ENCODE measurements at regions of chr3 and their contacts with region 1.

Region 1: DNA sequence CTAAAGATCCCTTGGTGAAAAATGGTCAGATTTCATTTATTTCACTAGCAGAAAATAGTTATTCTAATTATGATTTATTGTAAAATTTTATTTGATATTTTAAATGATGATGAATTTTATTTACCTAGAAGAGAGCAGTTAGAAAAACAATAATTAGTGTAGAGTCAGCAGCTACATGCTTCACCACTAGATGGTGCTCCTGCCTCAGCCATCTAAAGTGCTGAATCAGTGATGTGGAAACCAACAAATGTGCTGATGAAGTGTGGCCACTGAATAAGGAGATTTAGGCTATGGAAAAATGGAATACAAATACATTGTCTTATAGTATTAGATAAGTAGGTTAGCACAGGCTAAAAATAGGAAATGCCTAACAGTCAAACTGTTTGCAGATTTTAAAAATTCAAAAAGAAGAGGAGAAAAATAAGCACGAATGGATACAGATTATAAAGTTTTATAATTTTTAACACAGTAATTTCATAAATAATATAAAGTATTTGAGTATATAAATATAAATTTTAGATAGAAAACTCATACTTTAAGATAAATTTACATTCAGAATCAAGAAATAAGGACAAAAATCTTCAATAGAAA is 109.8 kb downstream of the PPP2R3A start:
- DNase-seq: peak; percentile 52 to 85 (median 74)
- ATAC-seq: peak; percentile 55
- H3K4me3 ChIP-seq: no peak overlapping the region
- H3K4me3 Mint-ChIP-seq: no peak overlapping the region
- H3K27ac ChIP-seq: no peak overlapping the region
- H3K27ac Mint-ChIP-seq: no peak overlapping the region
- H3K4me1 ChIP-seq: no peaks in the 10 kb centered on the region
- H3K4me1 Mint-ChIP-seq: peaks cover 4% of the 10 kb centered on the region
- H3K27me3 ChIP-seq: no peaks in the 10 kb centered on the region
- H3K27me3 Mint-ChIP-seq: no peaks in the 10 kb centered on the region
- CTCF ChIP-seq: peak; percentile 99

Region 2: DNA sequence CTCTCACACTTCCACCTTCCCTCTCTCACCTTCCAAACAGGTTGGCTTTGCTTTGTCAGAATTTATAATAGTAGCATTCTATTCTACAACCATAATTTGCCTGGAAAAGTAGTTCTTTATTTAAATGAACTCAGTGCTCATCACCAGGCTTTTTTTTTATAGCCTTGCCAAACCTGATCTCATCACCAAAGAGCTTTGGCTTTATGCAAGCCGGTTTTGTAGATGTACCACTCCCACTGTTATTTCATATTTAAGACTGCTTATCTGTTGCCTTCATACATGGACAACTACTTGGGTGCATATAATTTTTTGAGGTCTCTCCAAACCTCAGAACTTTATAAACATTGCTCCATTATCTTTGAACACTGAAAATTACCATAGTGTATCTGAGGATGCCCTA is 355.9 kb before region 1 on chr3:
- CTCF ChIA-PET with region 1: no interaction called
- POLR2A ChIA-PET with region 1: no interaction called
- intact Hi-C with region 1: no loop called
- DNase-seq: no peak
- ATAC-seq: no peak
- H3K4me3 ChIP-seq: no peak overlapping the region
- H3K4me3 Mint-ChIP-seq: no peak overlapping the region
- H3K27ac ChIP-seq: no peak overlapping the region
- H3K27ac Mint-ChIP-seq: no peak overlapping the region
- H3K4me1 ChIP-seq: no peaks in the 10 kb centered on the region
- H3K4me1 Mint-ChIP-seq: no peaks in the 10 kb centered on the region
- H3K27me3 ChIP-seq: no peaks in the 10 kb centered on the region
- H3K27me3 Mint-ChIP-seq: no peaks in the 10 kb centered on the region
- CTCF ChIP-seq: no peak

Region 3: GRCh38 chr3:136171097-136171542 is 95.8 kb after region 1 on chr3:
- CTCF ChIA-PET with region 1: no interaction called
- POLR2A ChIA-PET with region 1: no interaction called
- intact Hi-C with region 1: loop called (anchors 1 to 5 kb)
- DNase-seq: no peak
- ATAC-seq: no peak
- H3K4me3 ChIP-seq: no peak overlapping the region
- H3K4me3 Mint-ChIP-seq: peak overlapping the region; percentile 3
- H3K27ac ChIP-seq: peak overlapping the region in 1 of 2 experiments; percentile 1
- H3K27ac Mint-ChIP-seq: no peak overlapping the region
- H3K4me1 ChIP-seq: peaks cover 78% of the 10 kb centered on the region
- H3K4me1 Mint-ChIP-seq: peaks cover 42% of the 10 kb centered on the region
- H3K27me3 ChIP-seq: no peaks in the 10 kb centered on the region
- H3K27me3 Mint-ChIP-seq: no peaks in the 10 kb centered on the region
- CTCF ChIP-seq: no peak

Region 4: GRCh38 chr3:136250226-136250902 is 175.1 kb after region 1 on chr3 and contains the start of gene PCCB:
- CTCF ChIA-PET with region 1: interaction called, 4 read pairs
- POLR2A ChIA-PET with region 1: no interaction called
- intact Hi-C with region 1: loop called (anchors 1 to 5 kb)
- DNase-seq: peak; percentile 84 to 95 (median 90)
- ATAC-seq: peak; percentile 96
- H3K4me3 ChIP-seq: peak within 1 kb of the TSS; percentile 88 to 93
- H3K4me3 Mint-ChIP-seq: peak within 1 kb of the TSS; percentile 94
- H3K27ac ChIP-seq: peak within 1 kb of the TSS; percentile 74 to 89
- H3K27ac Mint-ChIP-seq: peak within 1 kb of the TSS; percentile 85
- H3K4me1 ChIP-seq: peaks cover 16% of the 10 kb centered on the region
- H3K4me1 Mint-ChIP-seq: peaks cover 23% of the 10 kb centered on the region
- H3K27me3 ChIP-seq: no peaks in the 10 kb centered on the region
- H3K27me3 Mint-ChIP-seq: no peaks in the 10 kb centered on the region
- CTCF ChIP-seq: peak; percentile 91
- total RNA-seq, gene PCCB: 12.3 to 15.8 TPM

Region 5: GRCh38 chr3:136390574-136390973 is 315.3 kb after region 1 on chr3:
- CTCF ChIA-PET with region 1: interaction called, 20 read pairs
- POLR2A ChIA-PET with region 1: no interaction called
- intact Hi-C with region 1: loop called (anchors 2 to 5 kb)
- DNase-seq: no peak
- ATAC-seq: no peak
- H3K4me3 ChIP-seq: no peak overlapping the region
- H3K4me3 Mint-ChIP-seq: no peak overlapping the region
- H3K27ac ChIP-seq: no peak overlapping the region
- H3K27ac Mint-ChIP-seq: no peak overlapping the region
- H3K4me1 ChIP-seq: no peaks in the 10 kb centered on the region
- H3K4me1 Mint-ChIP-seq: peaks cover 2% of the 10 kb centered on the region
- H3K27me3 ChIP-seq: no peaks in the 10 kb centered on the region
- H3K27me3 Mint-ChIP-seq: no peaks in the 10 kb centered on the region
- CTCF ChIP-seq: no peak

Region 6: DNA sequence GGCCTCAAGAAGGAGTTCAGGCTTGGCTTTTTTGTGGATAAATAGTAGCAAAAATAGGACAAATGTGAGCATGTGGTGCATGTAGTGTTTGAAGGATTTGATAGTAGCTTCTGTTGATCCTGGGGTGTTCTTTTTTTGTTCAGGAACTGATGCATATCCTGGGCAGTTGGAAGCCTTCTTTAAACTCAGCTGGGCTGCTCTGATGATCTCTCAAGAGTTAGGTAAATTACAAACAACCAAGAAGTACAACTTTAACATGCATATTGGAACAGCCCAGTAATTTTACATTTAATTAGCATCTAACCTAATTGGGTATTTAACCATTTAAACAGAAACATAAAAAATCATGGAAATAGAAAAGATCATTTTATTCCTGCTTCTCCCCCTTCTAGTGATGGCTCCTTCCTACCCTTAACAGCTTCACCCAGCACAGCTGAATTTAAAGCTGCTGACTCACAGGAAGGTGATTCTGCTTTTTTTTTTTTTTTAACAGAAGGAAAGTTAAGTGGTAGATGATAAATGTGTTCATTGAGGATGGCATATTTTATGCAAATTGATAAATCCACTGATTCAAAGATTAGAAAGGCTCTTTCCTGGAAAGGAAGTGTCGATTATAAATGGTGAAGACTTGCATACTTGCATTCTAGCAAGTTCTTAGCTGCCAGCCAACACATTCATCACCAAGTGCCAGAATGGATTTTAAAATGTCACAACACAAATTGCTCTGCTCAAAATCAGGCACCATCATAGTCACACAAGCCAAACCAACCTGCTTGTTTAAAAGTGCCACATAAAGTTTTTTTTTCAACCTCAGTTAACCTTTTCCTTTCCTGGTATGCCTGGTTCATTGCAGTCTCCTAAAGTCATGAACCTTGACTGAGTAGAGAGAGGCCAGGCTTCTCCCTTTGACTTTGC is 763.6 kb after region 1 on chr3:
- CTCF ChIA-PET with region 1: no interaction called
- POLR2A ChIA-PET with region 1: no interaction called
- intact Hi-C with region 1: no loop called
- DNase-seq: no peak
- ATAC-seq: no peak
- H3K4me3 ChIP-seq: no peak overlapping the region
- H3K4me3 Mint-ChIP-seq: no peak overlapping the region
- H3K27ac ChIP-seq: no peak overlapping the region
- H3K27ac Mint-ChIP-seq: no peak overlapping the region
- H3K4me1 ChIP-seq: no peaks in the 10 kb centered on the region
- H3K4me1 Mint-ChIP-seq: peaks cover 3% of the 10 kb centered on the region
- H3K27me3 ChIP-seq: no peaks in the 10 kb centered on the region
- H3K27me3 Mint-ChIP-seq: no peaks in the 10 kb centered on the region
- CTCF ChIP-seq: no peak

Region 7: DNA sequence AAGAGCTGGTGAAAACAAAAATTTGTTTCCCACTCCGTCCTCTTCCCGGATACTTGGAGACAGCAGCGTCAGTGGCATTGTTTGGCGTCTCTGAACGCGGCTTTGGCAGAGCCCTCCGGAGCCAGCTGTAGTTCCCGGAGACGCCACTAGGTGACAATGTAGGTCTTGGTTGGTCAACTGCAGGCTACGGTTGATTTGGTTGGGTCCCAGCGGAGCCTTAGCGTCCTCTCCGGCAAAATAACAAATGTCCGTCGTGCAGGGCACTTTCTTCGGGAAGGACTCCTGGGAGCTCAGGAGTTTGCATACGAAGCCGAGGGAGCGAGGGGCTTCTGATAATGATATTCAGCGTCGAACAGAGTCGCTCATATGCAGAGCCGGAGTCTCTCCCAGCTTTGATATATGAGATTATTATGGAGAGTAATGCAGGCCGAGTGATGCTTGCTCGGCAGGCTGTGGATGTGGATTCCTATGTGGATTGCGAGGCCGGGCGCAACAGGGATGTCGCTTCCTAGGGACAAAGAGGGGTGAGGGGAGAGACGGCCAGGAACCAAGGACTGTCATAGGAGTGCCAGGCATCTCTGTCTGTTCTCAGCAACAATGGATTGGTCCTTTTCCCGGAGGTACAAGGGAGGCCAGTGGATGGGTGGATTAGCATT is 957.3 kb after region 1 on chr3:
- CTCF ChIA-PET with region 1: interaction called, 4 read pairs
- POLR2A ChIA-PET with region 1: no interaction called
- intact Hi-C with region 1: loop called (anchors 5 kb)
- DNase-seq: peak; percentile 56 to 84 (median 73)
- ATAC-seq: peak; percentile 86
- H3K4me3 ChIP-seq: peak overlapping the region; percentile 13 to 19
- H3K4me3 Mint-ChIP-seq: peak overlapping the region; percentile 77
- H3K27ac ChIP-seq: no peak overlapping the region
- H3K27ac Mint-ChIP-seq: no peak overlapping the region
- H3K4me1 ChIP-seq: peaks cover 4% of the 10 kb centered on the region
- H3K4me1 Mint-ChIP-seq: peaks cover 9% of the 10 kb centered on the region
- H3K27me3 ChIP-seq: no peaks in the 10 kb centered on the region
- H3K27me3 Mint-ChIP-seq: peaks cover 22% of the 10 kb centered on the region
- CTCF ChIP-seq: peak; percentile 99

Region 8: GRCh38 chr3:137970914-137971831 is 1895.9 kb after region 1 on chr3:
- CTCF ChIA-PET with region 1: no interaction called
- POLR2A ChIA-PET with region 1: no interaction called
- intact Hi-C with region 1: loop called in 1 of 2 experiments (anchors 2 kb)
- DNase-seq: peak in 8 of 9 experiments; percentile 4 to 50 (median 32)
- ATAC-seq: no peak
- H3K4me3 ChIP-seq: no peak overlapping the region
- H3K4me3 Mint-ChIP-seq: no peak overlapping the region
- H3K27ac ChIP-seq: no peak overlapping the region
- H3K27ac Mint-ChIP-seq: no peak overlapping the region
- H3K4me1 ChIP-seq: no peaks in the 10 kb centered on the region
- H3K4me1 Mint-ChIP-seq: no peaks in the 10 kb centered on the region
- H3K27me3 ChIP-seq: peaks cover 0 to 3% of the 10 kb centered on the region in 2 experiments
- H3K27me3 Mint-ChIP-seq: peaks cover 14% of the 10 kb centered on the region
- CTCF ChIP-seq: peak; percentile 61